A673 (cell line): ENCODE measurements at regions of chr3 and their contacts with region 1.

Region 1: DNA sequence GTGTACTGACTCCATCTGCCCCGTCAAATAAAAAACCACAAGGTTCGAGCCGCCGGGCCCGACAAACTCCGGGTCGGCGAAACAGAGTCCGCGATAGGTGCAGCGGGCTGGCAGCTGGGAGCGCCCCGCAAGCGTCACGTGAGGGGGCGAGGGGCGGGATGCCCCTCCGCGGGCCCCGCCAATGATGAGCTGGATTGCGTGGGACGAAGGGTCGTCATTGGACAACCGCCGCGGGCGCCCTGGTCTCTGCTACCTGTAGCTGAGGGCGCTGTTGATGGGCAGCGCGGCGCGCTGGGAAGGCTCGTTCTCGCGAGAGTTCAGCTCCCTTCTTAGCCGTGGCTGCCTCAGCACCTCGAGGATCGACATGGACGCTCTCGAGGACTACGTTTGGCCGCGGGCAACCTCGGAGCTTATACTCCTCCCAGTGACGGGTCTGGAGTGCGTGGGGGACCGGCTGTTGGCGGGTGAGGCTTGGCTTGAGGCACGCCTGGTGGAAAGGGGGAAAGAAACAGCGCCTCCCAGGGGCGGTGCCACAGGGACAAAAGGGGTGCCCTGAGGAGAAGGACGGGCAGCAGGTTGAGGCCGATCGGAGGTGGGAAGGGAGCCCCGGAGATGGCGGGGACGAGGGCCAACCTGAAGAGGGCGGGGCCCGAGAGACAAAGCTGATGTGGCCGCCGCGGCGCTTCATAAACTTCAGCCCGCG is at the start of gene WDR6:
- DNase-seq: peak; percentile 92
- H3K4me3 ChIP-seq: peak within 1 kb of the TSS; percentile 74
- H3K27ac ChIP-seq: peak within 1 kb of the TSS; percentile 97
- H3K4me1 ChIP-seq: no peaks in the 10 kb centered on the region
- H3K27me3 ChIP-seq: no peaks in the 10 kb centered on the region
- CTCF ChIP-seq: peak; percentile 46
- total RNA-seq, gene WDR6: 88.5 and 93.7 TPM in 2 replicates

Region 2: GRCh38 chr3:48989796-48990635 is 17.2 kb before region 1 on chr3 and contains the start of gene P4HTM:
- CTCF ChIA-PET with region 1: interaction called, 5 read pairs
- POLR2A ChIA-PET with region 1: interaction called, 13 read pairs
- intact Hi-C with region 1: no loop called
- DNase-seq: peak; percentile 85
- H3K4me3 ChIP-seq: peak within 1 kb of the TSS; percentile 64
- H3K27ac ChIP-seq: peak within 1 kb of the TSS; percentile 75
- H3K4me1 ChIP-seq: peaks cover 3% of the 10 kb centered on the region
- H3K27me3 ChIP-seq: no peaks in the 10 kb centered on the region
- CTCF ChIP-seq: peak; percentile 43
- total RNA-seq, gene P4HTM: 13.3 and 14.9 TPM in 2 replicates

Region 3: DNA sequence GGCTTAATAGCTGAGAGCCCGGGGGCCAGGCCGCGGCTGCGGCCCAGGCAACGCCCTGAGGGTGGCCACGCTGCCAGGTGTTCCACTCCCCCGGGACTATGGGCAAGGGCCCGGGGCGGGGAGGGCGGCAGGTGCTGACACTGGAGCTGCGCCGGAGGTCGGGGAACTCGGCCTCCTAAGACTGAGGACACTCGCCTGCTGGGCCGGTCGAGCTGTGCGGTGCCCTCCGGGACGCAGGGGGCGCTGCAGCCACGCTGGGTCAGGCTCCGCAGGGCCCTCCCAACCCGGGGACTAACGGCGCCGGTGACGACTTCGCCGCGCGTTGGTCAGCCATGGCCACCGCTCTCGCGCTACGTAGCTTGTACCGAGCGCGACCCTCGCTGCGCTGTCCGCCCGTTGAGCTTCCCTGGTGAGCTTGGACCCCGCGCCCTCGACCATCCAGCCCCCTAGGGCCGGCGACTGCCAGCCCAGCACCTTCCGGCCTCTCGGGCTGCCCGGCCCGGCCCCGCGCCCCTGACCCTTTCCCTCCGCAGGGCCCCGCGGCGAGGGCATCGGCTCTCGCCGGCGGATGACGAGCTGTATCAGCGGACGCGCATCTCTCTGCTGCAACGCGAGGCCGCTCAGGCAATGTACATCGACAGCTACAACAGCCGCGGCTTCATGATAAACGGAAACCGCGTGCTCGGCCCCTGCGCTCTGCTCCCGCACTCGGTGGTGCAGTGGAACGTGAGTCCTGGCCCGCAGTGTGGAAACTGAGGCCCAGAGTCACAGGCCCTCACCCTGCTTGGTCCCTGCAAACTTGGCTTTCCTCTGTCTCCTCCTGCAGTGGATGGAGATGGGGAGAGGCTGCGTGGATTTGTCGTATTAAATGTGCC is 14.8 kb after region 1 on chr3 and contains the start of gene NDUFAF3:
- CTCF ChIA-PET with region 1: interaction called, 14 read pairs
- POLR2A ChIA-PET with region 1: no interaction called
- intact Hi-C with region 1: no loop called
- DNase-seq: peak; percentile 85
- H3K4me3 ChIP-seq: peak within 1 kb of the TSS; percentile 83
- H3K27ac ChIP-seq: peak within 1 kb of the TSS; percentile 96
- H3K4me1 ChIP-seq: no peaks in the 10 kb centered on the region
- H3K27me3 ChIP-seq: no peaks in the 10 kb centered on the region
- CTCF ChIP-seq: peak; percentile 77
- total RNA-seq, gene NDUFAF3: 36.6 and 39.1 TPM in 2 replicates